ENCODE measurements at regions of chr2 and their contacts with region 1.

Region 1: DNA sequence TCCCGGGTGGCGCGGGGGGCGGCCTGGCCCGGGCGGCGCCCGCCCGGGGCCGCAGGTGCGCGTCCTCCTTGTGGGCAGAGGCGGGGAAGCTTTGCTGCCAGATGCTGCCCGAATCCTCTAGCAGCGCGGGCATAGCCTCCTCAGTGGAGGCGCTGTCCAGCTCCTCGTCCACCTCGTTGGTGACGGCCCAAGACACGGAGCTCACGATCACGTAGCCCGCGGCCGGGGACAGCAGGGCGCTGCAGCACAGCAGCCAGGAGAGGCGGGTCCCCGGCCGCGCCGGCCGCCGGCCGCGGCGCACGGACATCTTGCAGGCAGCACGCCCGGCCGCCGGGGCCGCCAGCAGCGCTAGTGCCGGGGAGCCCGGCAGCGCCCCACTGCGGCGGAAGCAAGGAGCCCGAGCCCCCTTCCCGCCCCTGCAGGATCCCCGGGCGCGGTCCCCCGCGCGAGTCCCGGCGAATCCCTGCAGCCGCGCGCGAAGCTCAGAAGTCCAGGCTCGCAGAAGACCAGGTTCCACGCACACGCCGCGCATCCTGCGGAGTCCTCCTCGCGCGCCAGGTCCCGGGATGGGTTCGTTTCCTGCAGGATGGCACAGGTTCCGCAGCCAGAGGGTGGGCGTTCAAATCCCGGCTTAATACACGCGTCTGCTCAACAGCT is at the start of gene CREG2:
- DNase-seq: peak; percentile 25 to 92 (median 80)

Region 2: GRCh38 chr2:101272045-101272784 is 115.1 kb before region 1 on chr2:
- intact Hi-C with region 1: loop called (anchors 10 kb)
- DNase-seq: no peak

Region 3: DNA sequence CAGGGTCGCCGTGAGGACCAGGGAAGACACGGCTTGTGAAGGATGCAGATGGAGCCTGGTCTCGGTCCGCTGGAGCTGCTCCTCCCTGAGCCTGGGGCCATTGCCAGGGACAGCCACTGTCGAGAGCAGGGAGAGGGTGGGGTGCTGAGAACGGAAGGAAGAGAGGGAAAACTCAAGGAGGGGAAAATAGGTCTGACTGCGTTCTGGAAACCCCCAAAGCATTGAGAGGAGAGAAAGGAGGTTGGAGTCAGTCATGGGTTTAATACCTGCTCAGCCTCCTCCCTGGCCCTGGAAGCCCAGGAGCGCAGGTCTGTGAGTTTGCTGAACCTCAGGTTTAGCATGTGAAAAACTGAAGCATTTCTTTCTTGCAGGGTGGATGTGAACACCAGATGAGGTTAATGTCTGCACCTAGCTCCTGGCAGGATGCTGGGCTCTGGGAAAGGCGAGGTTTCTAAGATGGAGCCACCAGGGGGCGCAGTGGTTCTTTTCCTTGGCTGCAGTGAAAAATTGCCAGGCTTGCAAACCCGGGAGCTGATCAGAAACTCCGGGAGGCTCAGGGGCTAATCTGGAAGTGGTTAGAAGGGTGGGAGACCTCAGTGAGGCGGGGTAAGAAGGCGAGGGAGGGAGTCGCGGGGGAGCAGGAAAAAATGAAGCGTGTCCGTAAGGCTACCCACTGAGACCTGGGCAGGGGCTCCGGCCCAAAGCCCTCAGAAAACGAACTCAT is 45.2 kb before region 1 on chr2:
- intact Hi-C with region 1: loop called (anchors 5 kb)
- DNase-seq: peak; percentile 54 to 96 (median 84)

Region 4: GRCh38 chr2:101486258-101486701 is 99.0 kb after region 1 on chr2:
- intact Hi-C with region 1: no loop called
- DNase-seq: no peak